ENCODE measurements at regions of chr1 and their contacts with region 1.

Region 1: DNA sequence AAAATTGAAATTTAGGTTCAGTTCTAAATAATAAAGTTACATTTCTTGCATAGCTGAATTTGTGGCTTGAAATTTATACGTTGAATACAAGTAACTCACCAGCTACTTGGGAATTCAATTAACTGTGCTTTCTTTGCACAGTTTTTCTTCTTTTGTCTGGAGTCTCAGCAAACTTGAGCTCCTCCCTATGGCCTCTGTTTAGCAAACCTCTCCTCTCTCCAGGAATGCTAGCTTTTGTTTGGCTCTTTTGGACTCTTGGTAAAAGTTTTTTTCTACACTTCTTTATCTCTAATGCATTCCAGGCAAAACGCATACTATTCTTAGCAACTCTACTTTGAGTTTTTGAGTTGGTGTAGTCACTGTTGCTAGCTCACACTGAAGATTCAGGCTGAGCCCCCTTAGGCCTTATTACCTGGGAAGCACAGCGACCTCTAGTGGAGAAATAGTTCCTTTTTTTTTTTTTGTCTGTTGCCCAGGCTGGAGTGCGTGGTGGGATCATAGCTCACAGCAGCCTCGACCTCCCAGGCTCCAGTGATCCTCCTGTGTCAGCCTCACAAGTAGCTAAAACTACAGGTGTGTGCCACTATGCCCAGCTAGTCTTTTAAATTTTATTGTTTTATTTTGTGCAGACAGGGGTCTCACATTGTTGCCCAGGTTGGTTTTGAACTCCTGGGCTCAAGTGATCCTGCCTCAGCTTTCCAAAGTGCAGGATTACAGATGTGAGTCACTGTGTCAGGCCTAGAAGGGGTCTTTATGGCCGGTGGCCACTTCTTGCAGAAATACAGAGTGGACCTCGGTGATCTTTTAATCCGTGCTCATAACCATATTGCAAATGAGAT is 61.7 kb downstream of the CASQ2 start:
- DNase-seq: peak; percentile 42
- ATAC-seq: no peak
- H3K4me3 ChIP-seq: no peak overlapping the region
- H3K4me3 Mint-ChIP-seq: no peak overlapping the region
- H3K27ac ChIP-seq: no peak overlapping the region
- H3K27ac Mint-ChIP-seq: no peak overlapping the region
- H3K4me1 ChIP-seq: no peaks in the 10 kb centered on the region
- H3K4me1 Mint-ChIP-seq: no peaks in the 10 kb centered on the region
- H3K27me3 ChIP-seq: peaks cover 0 to 5% (median 0%) of the 10 kb centered on the region in 4 experiments
- H3K27me3 Mint-ChIP-seq: peaks cover 11% of the 10 kb centered on the region
- CTCF ChIP-seq: peak; percentile 72

Region 2: DNA sequence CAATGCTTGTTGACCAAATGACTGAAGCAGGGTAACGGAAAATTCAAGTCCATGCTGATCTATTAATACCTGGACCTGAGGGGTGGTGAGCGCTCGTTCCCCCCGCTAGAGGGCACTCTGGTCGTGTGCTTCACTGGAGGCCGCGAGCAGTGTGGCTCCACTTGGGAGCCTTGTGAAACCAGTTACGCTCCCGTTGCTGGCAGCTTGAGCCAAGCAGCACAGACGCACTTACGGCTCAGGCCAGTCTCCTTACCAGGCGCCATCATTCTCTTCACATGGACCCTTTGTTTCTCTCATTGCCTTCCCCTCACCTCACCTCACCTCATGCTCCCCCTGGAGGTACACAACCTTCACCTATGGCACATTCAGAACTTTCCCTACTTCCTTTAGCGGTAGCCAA is 567.8 kb before region 1 on chr1:
- CTCF ChIA-PET with region 1: no interaction called
- POLR2A ChIA-PET with region 1: no interaction called
- intact Hi-C with region 1: loop called (anchors 10 kb)
- DNase-seq: peak; percentile 63
- ATAC-seq: peak; percentile 76
- H3K4me3 ChIP-seq: no peak overlapping the region
- H3K4me3 Mint-ChIP-seq: peak overlapping the region; percentile 55
- H3K27ac ChIP-seq: no peak overlapping the region
- H3K27ac Mint-ChIP-seq: no peak overlapping the region
- H3K4me1 ChIP-seq: peaks cover 0 to 4% of the 10 kb centered on the region in 2 donors
- H3K4me1 Mint-ChIP-seq: peaks cover 4% of the 10 kb centered on the region
- H3K27me3 ChIP-seq: peaks cover 0 to 10% (median 3%) of the 10 kb centered on the region in 4 experiments
- H3K27me3 Mint-ChIP-seq: peaks cover 32% of the 10 kb centered on the region
- CTCF ChIP-seq: peak; percentile 83

Region 3: GRCh38 chr1:115665319-115666096 is 41.3 kb before region 1 on chr1:
- CTCF ChIA-PET with region 1: no interaction called
- POLR2A ChIA-PET with region 1: no interaction called
- intact Hi-C with region 1: no loop called
- DNase-seq: no peak
- ATAC-seq: no peak
- H3K4me3 ChIP-seq: no peak overlapping the region
- H3K4me3 Mint-ChIP-seq: no peak overlapping the region
- H3K27ac ChIP-seq: no peak overlapping the region
- H3K27ac Mint-ChIP-seq: no peak overlapping the region
- H3K4me1 ChIP-seq: no peaks in the 10 kb centered on the region
- H3K4me1 Mint-ChIP-seq: no peaks in the 10 kb centered on the region
- H3K27me3 ChIP-seq: no peaks in the 10 kb centered on the region
- H3K27me3 Mint-ChIP-seq: no peaks in the 10 kb centered on the region
- CTCF ChIP-seq: no peak